ENCODE measurements at regions of chr14 and their contacts with region 1.

Region 1: GRCh38 chr14:98466807-98467206 is 805.2 kb downstream of the BCL11B start:
- DNase-seq: no peak
- ATAC-seq: no peak
- H3K4me3 ChIP-seq: no peak overlapping the region
- H3K27ac ChIP-seq: no peak overlapping the region
- H3K4me1 ChIP-seq: no peaks in the 10 kb centered on the region
- H3K27me3 ChIP-seq: no peaks in the 10 kb centered on the region
- CTCF ChIP-seq: no peak
- POLR2A ChIP-seq: no peak
- RAD21 ChIP-seq: no peak

Region 2: GRCh38 chr14:98415766-98416165 is 51.0 kb before region 1 on chr14:
- CTCF ChIA-PET with region 1: no interaction called
- POLR2A ChIA-PET with region 1: no interaction called
- dilution Hi-C with region 1: no loop called
- in situ Hi-C with region 1: no loop called
- intact Hi-C with region 1: loop called (anchors 2 kb)
- DNase-seq: no peak
- ATAC-seq: no peak
- H3K4me3 ChIP-seq: no peak overlapping the region
- H3K27ac ChIP-seq: no peak overlapping the region
- H3K4me1 ChIP-seq: no peaks in the 10 kb centered on the region
- H3K27me3 ChIP-seq: no peaks in the 10 kb centered on the region
- CTCF ChIP-seq: no peak
- POLR2A ChIP-seq: no peak
- RAD21 ChIP-seq: no peak

Region 3: DNA sequence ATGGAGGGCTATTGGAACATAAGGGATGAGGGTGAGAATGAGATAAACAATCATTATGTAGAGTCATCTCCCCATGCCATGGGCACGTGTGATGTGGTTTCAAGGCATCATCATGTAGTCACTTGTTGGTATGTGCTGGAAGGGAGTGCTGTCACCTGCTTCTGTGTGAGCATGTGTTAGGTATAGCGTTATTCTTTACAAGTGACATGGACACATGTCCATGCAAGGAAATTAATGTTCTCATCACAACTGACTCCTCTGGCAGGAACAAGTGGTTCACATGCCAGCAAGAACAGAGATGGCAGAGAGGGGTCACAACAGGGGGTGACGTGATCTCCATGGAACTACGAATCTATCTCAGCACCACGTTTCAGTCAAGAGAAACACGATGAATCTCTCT is 10.6 kb before region 1 on chr14:
- CTCF ChIA-PET with region 1: no interaction called
- POLR2A ChIA-PET with region 1: no interaction called
- dilution Hi-C with region 1: no loop called
- in situ Hi-C with region 1: no loop called
- intact Hi-C with region 1: no loop called
- DNase-seq: no peak
- ATAC-seq: no peak
- H3K4me3 ChIP-seq: no peak overlapping the region
- H3K27ac ChIP-seq: no peak overlapping the region
- H3K4me1 ChIP-seq: no peaks in the 10 kb centered on the region
- H3K27me3 ChIP-seq: no peaks in the 10 kb centered on the region
- CTCF ChIP-seq: no peak
- POLR2A ChIP-seq: no peak
- RAD21 ChIP-seq: no peak

Region 4: GRCh38 chr14:98554857-98555256 is 88.0 kb after region 1 on chr14:
- CTCF ChIA-PET with region 1: no interaction called
- POLR2A ChIA-PET with region 1: no interaction called
- dilution Hi-C with region 1: no loop called
- in situ Hi-C with region 1: no loop called
- intact Hi-C with region 1: no loop called
- DNase-seq: no peak
- ATAC-seq: no peak
- H3K4me3 ChIP-seq: no peak overlapping the region
- H3K27ac ChIP-seq: no peak overlapping the region
- H3K4me1 ChIP-seq: no peaks in the 10 kb centered on the region
- H3K27me3 ChIP-seq: no peaks in the 10 kb centered on the region
- CTCF ChIP-seq: no peak
- POLR2A ChIP-seq: no peak
- RAD21 ChIP-seq: no peak

Region 5: GRCh38 chr14:99026471-99026870 is 559.7 kb after region 1 on chr14:
- CTCF ChIA-PET with region 1: no interaction called
- POLR2A ChIA-PET with region 1: no interaction called
- dilution Hi-C with region 1: no loop called
- in situ Hi-C with region 1: no loop called
- intact Hi-C with region 1: no loop called
- DNase-seq: no peak
- ATAC-seq: no peak
- H3K4me3 ChIP-seq: no peak overlapping the region
- H3K27ac ChIP-seq: no peak overlapping the region
- H3K4me1 ChIP-seq: no peaks in the 10 kb centered on the region
- H3K27me3 ChIP-seq: no peaks in the 10 kb centered on the region
- CTCF ChIP-seq: no peak
- POLR2A ChIP-seq: no peak
- RAD21 ChIP-seq: no peak

Measured in IMR-90 (cell line).